CD4-positive, alpha-beta T cell (primary cell): ENCODE measurements at regions of chr5 and their contacts with region 1.

Region 1: DNA sequence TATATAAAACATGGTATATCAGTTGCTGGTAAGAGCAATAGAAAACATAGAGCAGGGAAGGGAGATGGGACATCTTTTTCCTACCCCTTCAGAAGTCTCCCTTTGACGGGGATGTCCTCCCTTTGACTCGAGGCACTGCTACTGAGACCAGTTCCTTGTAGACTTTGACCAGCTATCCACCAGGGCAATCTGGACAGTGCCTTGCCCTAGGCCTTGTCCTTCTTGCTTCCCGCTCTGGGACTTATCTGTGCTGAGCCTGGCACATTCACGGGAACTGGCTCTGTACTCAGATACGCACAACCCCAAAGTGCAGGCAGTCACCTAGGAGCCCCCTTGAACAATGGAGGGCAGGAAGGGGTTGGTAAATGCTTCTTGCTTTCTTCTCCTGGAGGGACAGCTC is 116.6 kb upstream of the ANKH start:
- DNase-seq: no peak
- ATAC-seq: no peak
- H3K4me3 ChIP-seq: no peak overlapping the region
- H3K4me3 Mint-ChIP-seq: no peak overlapping the region
- H3K27ac ChIP-seq: no peak overlapping the region
- H3K27ac Mint-ChIP-seq: no peak overlapping the region
- H3K4me1 ChIP-seq: peaks cover 19% of the 10 kb centered on the region
- H3K4me1 Mint-ChIP-seq: peaks cover 31% of the 10 kb centered on the region
- H3K27me3 ChIP-seq: no peaks in the 10 kb centered on the region
- H3K27me3 Mint-ChIP-seq: no peaks in the 10 kb centered on the region
- CTCF ChIP-seq: no peak

Region 2: DNA sequence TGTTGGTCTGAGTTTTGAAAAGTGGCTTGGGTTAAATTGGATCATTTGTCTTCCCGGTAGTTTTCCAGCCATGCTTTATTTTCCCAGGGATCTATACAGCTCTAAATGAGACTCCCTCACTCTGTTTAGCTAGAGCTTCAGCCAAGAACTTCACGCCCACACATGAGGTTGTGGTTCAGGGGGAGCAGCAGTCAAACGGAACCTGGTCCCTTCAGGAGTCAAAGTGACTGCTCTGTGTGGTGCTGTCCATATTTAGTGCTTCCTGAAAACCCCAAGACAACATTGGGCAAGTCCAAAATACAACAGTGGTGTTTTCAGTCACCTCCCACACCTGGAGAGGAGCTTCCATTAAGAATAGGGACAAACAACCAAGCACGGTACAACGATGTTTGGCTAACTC is 207.1 kb before region 1 on chr5:
- CTCF ChIA-PET with region 1: no interaction called
- POLR2A ChIA-PET with region 1: no interaction called
- intact Hi-C with region 1: no loop called
- DNase-seq: no peak
- ATAC-seq: no peak
- H3K4me3 ChIP-seq: no peak overlapping the region
- H3K4me3 Mint-ChIP-seq: no peak overlapping the region
- H3K27ac ChIP-seq: no peak overlapping the region
- H3K27ac Mint-ChIP-seq: no peak overlapping the region
- H3K4me1 ChIP-seq: peaks cover 6% of the 10 kb centered on the region
- H3K4me1 Mint-ChIP-seq: peaks cover 75% of the 10 kb centered on the region
- H3K27me3 ChIP-seq: no peaks in the 10 kb centered on the region
- H3K27me3 Mint-ChIP-seq: no peaks in the 10 kb centered on the region
- CTCF ChIP-seq: no peak

Region 3: GRCh38 chr5:14879937-14880589 is 108.2 kb before region 1 on chr5:
- CTCF ChIA-PET with region 1: no interaction called
- POLR2A ChIA-PET with region 1: interaction called, 3 read pairs
- intact Hi-C with region 1: loop called in 1 of 2 experiments (anchors 5 kb)
- DNase-seq: no peak
- ATAC-seq: no peak
- H3K4me3 ChIP-seq: no peak overlapping the region
- H3K4me3 Mint-ChIP-seq: no peak overlapping the region
- H3K27ac ChIP-seq: no peak overlapping the region
- H3K27ac Mint-ChIP-seq: no peak overlapping the region
- H3K4me1 ChIP-seq: peaks cover 2% of the 10 kb centered on the region
- H3K4me1 Mint-ChIP-seq: peaks cover 12% of the 10 kb centered on the region
- H3K27me3 ChIP-seq: no peaks in the 10 kb centered on the region
- H3K27me3 Mint-ChIP-seq: no peaks in the 10 kb centered on the region
- CTCF ChIP-seq: no peak